Breast epithelium (tissue), 4 donors: ENCODE measurements at regions of chr6 and their contacts with region 1.

Region 1: GRCh38 chr6:62570372-62570771 is 284.3 kb upstream of the KHDRBS2 start:
- DNase-seq: no peak
- H3K4me3 ChIP-seq: no peak overlapping the region
- H3K27ac ChIP-seq: no peak overlapping the region
- H3K4me1 ChIP-seq: no peaks in the 10 kb centered on the region
- H3K27me3 ChIP-seq: no peaks in the 10 kb centered on the region
- CTCF ChIP-seq: no peak
- POLR2A ChIP-seq: no peak

Region 2: GRCh38 chr6:63919556-63920110 is 1349.3 kb after region 1 on chr6:
- intact Hi-C with region 1: loop called (anchors 5 kb)
- DNase-seq: no peak
- H3K4me3 ChIP-seq: no peak overlapping the region
- H3K27ac ChIP-seq: no peak overlapping the region
- H3K4me1 ChIP-seq: no peaks in the 10 kb centered on the region
- H3K27me3 ChIP-seq: no peaks in the 10 kb centered on the region
- CTCF ChIP-seq: no peak
- POLR2A ChIP-seq: no peak